Naive thymus-derived CD4-positive, alpha-beta T cell (primary cell): ENCODE measurements at regions of chr11 and their contacts with region 1.

Region 1: GRCh38 chr11:1889224-1890120 is 2.2 kb downstream of the PRR33 start:
- DNase-seq: peak; percentile 58 to 87 (median 83)
- ATAC-seq: peak; percentile 90
- H3K4me3 ChIP-seq: peak overlapping the region; percentile 61
- H3K4me3 Mint-ChIP-seq: peak overlapping the region; percentile 68 to 91 (median 82)
- H3K27ac ChIP-seq: peak overlapping the region; percentile 73
- H3K27ac Mint-ChIP-seq: peak overlapping the region; percentile 65 to 91 (median 85)
- H3K4me1 ChIP-seq: peaks cover 33 to 34% of the 10 kb centered on the region in 2 donors
- H3K4me1 Mint-ChIP-seq: peaks cover 18 to 57% (median 41%) of the 10 kb centered on the region in 7 donors
- H3K27me3 ChIP-seq: no peaks in the 10 kb centered on the region
- H3K27me3 Mint-ChIP-seq: no peaks in the 10 kb centered on the region

Region 2: GRCh38 chr11:1820463-1821325 is 68.8 kb before region 1 on chr11:
- CTCF ChIA-PET with region 1: no interaction called
- POLR2A ChIA-PET with region 1: no interaction called
- intact Hi-C with region 1: no loop called
- DNase-seq: no peak
- ATAC-seq: no peak
- H3K4me3 ChIP-seq: no peak overlapping the region
- H3K4me3 Mint-ChIP-seq: no peak overlapping the region
- H3K27ac ChIP-seq: no peak overlapping the region
- H3K27ac Mint-ChIP-seq: no peak overlapping the region
- H3K4me1 ChIP-seq: no peaks in the 10 kb centered on the region
- H3K4me1 Mint-ChIP-seq: no peaks in the 10 kb centered on the region
- H3K27me3 ChIP-seq: no peaks in the 10 kb centered on the region
- H3K27me3 Mint-ChIP-seq: peaks cover 0 to 6% (median 0%) of the 10 kb centered on the region in 5 donors

Region 3: DNA sequence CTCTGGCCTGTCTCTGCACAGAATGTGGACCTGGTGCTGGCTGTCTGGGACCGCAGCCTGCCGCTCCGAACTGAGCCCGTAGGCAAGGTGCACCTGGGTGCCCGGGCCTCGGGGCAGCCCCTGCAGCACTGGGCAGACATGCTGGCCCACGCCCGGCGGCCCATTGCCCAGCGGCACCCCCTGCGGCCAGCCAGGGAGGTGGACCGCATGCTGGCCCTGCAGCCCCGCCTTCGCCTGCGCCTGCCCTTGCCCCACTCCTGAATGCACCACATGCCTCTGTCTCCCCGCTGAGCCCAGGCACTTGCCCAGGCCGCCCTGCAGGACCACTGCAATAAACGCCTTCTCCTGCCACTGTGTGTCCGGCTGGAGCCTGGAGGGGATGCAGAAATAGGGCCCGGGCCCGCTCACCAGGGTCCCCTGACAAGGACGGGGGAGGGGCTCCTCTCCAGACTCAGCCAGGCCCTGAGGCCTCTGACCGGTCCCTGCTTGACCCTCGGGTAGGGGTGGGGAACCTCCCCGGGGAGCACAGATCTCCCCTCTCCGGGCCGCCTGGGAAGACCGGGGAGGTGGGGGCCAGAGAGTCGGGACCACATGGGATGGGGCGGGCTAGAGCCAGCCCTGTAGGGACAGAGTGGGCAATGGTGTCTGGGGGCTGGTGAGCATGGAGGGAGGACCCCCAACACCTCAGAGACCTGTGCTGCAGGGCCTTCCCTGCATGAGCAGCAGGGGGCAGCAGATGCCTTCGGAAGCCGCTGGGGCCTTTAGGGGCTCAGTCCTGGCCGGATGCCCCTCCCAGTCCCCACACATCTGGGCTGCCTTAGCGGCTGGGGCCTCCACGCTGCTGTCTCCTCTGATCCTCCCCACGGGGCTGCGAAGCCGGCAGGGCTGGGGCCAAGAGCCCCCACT is 52.0 kb before region 1 on chr11:
- CTCF ChIA-PET with region 1: interaction called, 3 read pairs
- POLR2A ChIA-PET with region 1: interaction called, 3 read pairs
- intact Hi-C with region 1: loop called in 1 of 2 experiments (anchors 1 kb)
- DNase-seq: peak; percentile 53 to 83 (median 75)
- ATAC-seq: peak; percentile 84
- H3K4me3 ChIP-seq: no peak overlapping the region
- H3K4me3 Mint-ChIP-seq: peak overlapping the region in 1 of 10 donors; percentile 14
- H3K27ac ChIP-seq: no peak overlapping the region
- H3K27ac Mint-ChIP-seq: peak overlapping the region in 1 of 9 donors; percentile 19
- H3K4me1 ChIP-seq: peaks cover 0 to 7% of the 10 kb centered on the region in 2 donors
- H3K4me1 Mint-ChIP-seq: peaks cover 0 to 11% (median 7%) of the 10 kb centered on the region in 7 donors
- H3K27me3 ChIP-seq: no peaks in the 10 kb centered on the region
- H3K27me3 Mint-ChIP-seq: peaks cover 0 to 3% (median 0%) of the 10 kb centered on the region in 5 donors

Region 4: GRCh38 chr11:1917671-1918516 is 28.4 kb after region 1 on chr11:
- CTCF ChIA-PET with region 1: interaction called, 5 read pairs
- POLR2A ChIA-PET with region 1: interaction called, 41 read pairs
- intact Hi-C with region 1: loop called (anchors 5 kb)
- DNase-seq: peak in 1 of 9 donors; percentile 19
- ATAC-seq: peak; percentile 50
- H3K4me3 ChIP-seq: no peak overlapping the region
- H3K4me3 Mint-ChIP-seq: no peak overlapping the region
- H3K27ac ChIP-seq: no peak overlapping the region
- H3K27ac Mint-ChIP-seq: peak overlapping the region in 1 of 9 donors; percentile 5
- H3K4me1 ChIP-seq: no peaks in the 10 kb centered on the region
- H3K4me1 Mint-ChIP-seq: peaks cover 9 to 32% (median 15%) of the 10 kb centered on the region in 7 donors
- H3K27me3 ChIP-seq: no peaks in the 10 kb centered on the region
- H3K27me3 Mint-ChIP-seq: peaks cover 0 to 15% (median 11%) of the 10 kb centered on the region in 5 donors

Region 5: GRCh38 chr11:1939006-1939625 is 49.6 kb after region 1 on chr11:
- CTCF ChIA-PET with region 1: no interaction called
- POLR2A ChIA-PET with region 1: no interaction called
- intact Hi-C with region 1: loop called (anchors 1 kb)
- DNase-seq: peak in 3 of 9 donors; percentile 2 to 18 (median 7)
- ATAC-seq: no peak
- H3K4me3 ChIP-seq: no peak overlapping the region
- H3K4me3 Mint-ChIP-seq: peak overlapping the region in 2 of 10 donors; percentile 23 to 32
- H3K27ac ChIP-seq: no peak overlapping the region
- H3K27ac Mint-ChIP-seq: peak overlapping the region in 1 of 9 donors; percentile 37
- H3K4me1 ChIP-seq: no peaks in the 10 kb centered on the region
- H3K4me1 Mint-ChIP-seq: peaks cover 0 to 24% (median 7%) of the 10 kb centered on the region in 7 donors
- H3K27me3 ChIP-seq: no peaks in the 10 kb centered on the region
- H3K27me3 Mint-ChIP-seq: peaks cover 0 to 3% (median 0%) of the 10 kb centered on the region in 5 donors